Sciatic nerve (tissue), 2 donors: ENCODE measurements at regions of chr15 and their contacts with region 1.

Region 1: GRCh38 chr15:90883976-90884718 is at the start of gene FES:
- DNase-seq: peak; percentile 84
- ATAC-seq: peak; percentile 62
- total RNA-seq, gene FES: 44.8 TPM

Region 2: DNA sequence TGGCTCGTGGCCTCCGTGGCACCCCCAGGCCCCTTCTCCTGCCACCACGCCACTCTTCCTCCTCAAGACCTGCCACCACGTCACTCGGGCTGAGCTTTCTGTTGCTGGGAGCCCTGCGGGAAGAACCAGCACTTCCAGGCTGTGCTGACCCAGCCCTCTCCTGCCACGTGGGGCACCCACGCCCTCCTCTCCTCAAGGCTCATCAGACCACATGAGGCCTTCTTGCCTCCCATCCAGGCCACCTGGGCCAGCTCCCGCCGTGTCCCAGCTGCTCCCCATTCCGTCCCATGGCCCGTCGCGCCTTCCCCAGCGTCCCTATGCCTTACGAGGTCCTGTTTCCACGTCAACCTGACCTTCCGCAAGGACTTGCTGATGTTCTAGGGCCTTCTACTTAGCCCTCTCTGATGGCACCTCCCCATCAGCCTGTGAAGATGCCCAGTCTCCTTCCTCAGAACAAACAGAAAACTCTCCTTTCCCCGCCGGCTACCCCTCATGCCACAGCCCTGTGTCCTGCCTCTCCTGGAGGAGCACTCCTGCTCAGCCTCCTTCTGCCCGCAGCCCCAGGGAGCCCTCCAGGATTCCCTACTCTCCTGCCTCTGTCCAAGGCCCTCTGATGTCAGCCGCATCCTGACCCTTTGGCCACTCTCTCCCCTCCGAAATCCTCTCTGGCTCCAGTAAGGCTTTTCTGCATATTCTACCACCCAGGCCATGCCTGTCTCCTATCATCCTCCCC is 238.1 kb before region 1 on chr15:
- intact Hi-C with region 1: loop called (anchors 2 kb)
- DNase-seq: no peak
- ATAC-seq: peak; percentile 18

Region 3: DNA sequence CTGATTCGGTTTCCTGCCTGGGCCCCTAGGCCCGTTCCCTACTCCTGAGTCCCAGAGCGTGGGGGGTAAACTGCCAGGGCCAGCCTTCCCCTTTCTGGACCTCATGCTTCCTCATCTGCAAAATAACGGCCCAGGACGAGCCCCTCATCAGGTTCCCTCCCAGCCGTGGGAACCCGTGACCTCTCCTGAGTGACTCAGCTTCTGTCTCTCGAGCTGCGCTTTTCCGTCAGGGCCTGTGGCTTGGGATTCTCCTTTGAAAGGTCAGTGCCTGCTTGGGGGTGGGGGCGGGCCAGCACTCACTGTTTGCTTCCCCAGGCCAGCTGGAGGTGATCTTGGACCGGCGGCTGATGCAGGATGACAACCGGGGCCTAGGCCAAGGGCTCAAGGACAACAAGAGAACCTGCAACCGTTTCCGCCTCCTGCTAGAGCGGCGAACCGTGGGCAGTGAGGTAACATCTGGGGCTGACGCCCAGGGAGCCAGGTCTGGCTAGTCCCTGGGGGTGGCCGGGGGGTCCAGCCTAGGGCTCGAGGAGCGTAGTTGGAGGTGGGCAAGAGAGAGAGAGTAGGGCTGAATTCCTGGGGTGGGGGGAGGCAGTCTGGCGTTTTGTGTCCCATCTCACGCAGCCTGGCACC is 31.8 kb after region 1 on chr15:
- intact Hi-C with region 1: no loop called
- DNase-seq: peak; percentile 70
- ATAC-seq: peak; percentile 46